Heart right ventricle (tissue), 16 donors: ENCODE measurements at regions of chr22 and their contacts with region 1.

Region 1: GRCh38 chr22:19164425-19164824 is 14.1 kb downstream of the SLC25A1 start:
- DNase-seq: no peak
- ATAC-seq: no peak
- H3K4me3 ChIP-seq: no peak overlapping the region
- H3K27ac ChIP-seq: no peak overlapping the region
- H3K4me1 ChIP-seq: peaks cover 2 to 5% (median 3%) of the 10 kb centered on the region in 9 donors
- H3K27me3 ChIP-seq: peaks cover 24 to 57% (median 41%) of the 10 kb centered on the region in 7 donors
- CTCF ChIP-seq: no peak

Region 2: DNA sequence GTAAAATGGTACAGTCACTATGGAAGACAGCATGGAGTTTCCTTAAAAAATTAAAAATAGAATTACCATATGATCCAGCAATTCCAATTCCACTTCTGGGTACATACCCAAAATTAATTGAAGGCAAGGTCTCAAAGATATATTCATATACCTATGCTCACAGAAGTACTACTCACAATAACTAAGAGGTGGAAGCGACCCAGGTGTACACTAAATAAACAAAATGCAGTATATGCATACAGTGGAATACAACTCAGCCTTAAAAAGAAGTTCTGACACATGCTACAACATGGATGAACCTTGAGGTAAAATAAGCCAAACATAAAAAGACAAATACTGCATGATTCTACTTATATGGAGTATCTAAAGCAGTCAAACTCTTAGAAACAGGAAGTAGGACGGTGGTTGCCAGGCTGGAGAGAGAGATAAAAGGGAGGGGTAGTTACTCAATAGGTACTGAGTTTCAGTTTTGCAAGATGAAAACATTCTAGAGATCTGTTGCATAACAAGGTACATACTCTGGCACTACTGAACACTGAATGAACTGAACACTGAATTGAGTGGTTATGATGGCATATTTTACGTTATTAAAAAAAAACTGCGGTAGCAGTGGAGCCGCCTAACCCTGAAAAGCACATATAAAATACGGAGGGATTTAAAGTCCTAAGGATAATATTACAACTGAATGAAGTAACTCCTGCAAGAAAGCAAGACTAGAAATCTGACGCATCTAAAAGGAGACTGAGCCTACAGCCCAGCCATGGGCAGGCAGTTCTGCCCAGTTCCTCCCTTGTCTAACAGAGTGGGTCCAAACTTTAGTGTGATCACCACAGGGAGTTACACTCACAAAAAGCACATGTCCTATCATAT is 55.0 kb before region 1 on chr22:
- intact Hi-C with region 1: loop called in 1 of 10 experiments (anchors 5 kb)
- DNase-seq: no peak
- ATAC-seq: peak in 6 of 8 donors; percentile 44 to 83 (median 60)
- H3K4me3 ChIP-seq: peak overlapping the region in 1 of 10 donors; percentile 13
- H3K27ac ChIP-seq: peak overlapping the region in 2 of 10 donors; percentile 19 to 78
- H3K4me1 ChIP-seq: peaks cover 13 to 69% (median 53%) of the 10 kb centered on the region in 9 donors
- H3K27me3 ChIP-seq: no peaks in the 10 kb centered on the region
- CTCF ChIP-seq: no peak

Region 3: DNA sequence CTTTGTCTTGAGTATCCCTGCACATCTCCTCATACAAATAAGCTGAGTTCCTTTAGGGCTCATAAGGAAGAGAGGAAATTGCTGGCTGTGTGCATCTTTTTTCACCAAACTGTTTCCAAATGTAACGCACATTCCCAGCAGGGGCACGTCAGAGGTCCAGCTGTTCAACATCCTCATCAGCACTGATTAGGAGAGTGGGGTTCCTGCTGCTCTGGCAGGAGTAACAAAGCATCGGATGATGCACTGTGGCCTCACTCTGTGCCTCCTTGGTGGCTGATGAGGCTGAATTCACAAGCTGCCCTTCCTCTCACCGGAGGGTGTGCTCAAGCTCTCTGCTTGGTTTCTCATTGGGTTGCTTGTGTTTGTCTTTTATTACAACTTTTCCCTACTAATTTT is 49.7 kb after region 1 on chr22:
- intact Hi-C with region 1: no loop called
- DNase-seq: no peak
- ATAC-seq: no peak
- H3K4me3 ChIP-seq: no peak overlapping the region
- H3K27ac ChIP-seq: no peak overlapping the region
- H3K4me1 ChIP-seq: peaks cover 0 to 16% (median 16%) of the 10 kb centered on the region in 9 donors
- H3K27me3 ChIP-seq: no peaks in the 10 kb centered on the region
- CTCF ChIP-seq: no peak

Region 4: GRCh38 chr22:19488884-19489843 is 324.7 kb after region 1 on chr22:
- intact Hi-C with region 1: loop called in 1 of 10 experiments (anchors 5 kb)
- DNase-seq: no peak
- ATAC-seq: peak in 5 of 8 donors; percentile 31 to 81 (median 57)
- H3K4me3 ChIP-seq: no peak overlapping the region
- H3K27ac ChIP-seq: no peak overlapping the region
- H3K4me1 ChIP-seq: peaks cover 0 to 6% (median 0%) of the 10 kb centered on the region in 9 donors
- H3K27me3 ChIP-seq: no peaks in the 10 kb centered on the region
- CTCF ChIP-seq: peak in 4 of 9 donors; percentile 5 to 34 (median 24)